CD4-positive, alpha-beta memory T cell (primary cell): ENCODE measurements at regions of chr7 and their contacts with region 1.

Region 1: GRCh38 chr7:92621026-92621540 is 30.9 kb upstream of the FAM133B start:
- DNase-seq: peak; percentile 75 to 86 (median 78)
- H3K4me3 ChIP-seq: no peak overlapping the region
- H3K4me3 Mint-ChIP-seq: peak overlapping the region in 5 of 8 donors; percentile 17 to 71 (median 36)
- H3K27ac ChIP-seq: peak overlapping the region; percentile 39
- H3K27ac Mint-ChIP-seq: peak overlapping the region; percentile 45 to 94 (median 88)
- H3K4me1 ChIP-seq: peaks cover 25% of the 10 kb centered on the region
- H3K4me1 Mint-ChIP-seq: peaks cover 19 to 40% (median 26%) of the 10 kb centered on the region in 4 donors
- H3K27me3 ChIP-seq: no peaks in the 10 kb centered on the region
- H3K27me3 Mint-ChIP-seq: no peaks in the 10 kb centered on the region

Region 2: DNA sequence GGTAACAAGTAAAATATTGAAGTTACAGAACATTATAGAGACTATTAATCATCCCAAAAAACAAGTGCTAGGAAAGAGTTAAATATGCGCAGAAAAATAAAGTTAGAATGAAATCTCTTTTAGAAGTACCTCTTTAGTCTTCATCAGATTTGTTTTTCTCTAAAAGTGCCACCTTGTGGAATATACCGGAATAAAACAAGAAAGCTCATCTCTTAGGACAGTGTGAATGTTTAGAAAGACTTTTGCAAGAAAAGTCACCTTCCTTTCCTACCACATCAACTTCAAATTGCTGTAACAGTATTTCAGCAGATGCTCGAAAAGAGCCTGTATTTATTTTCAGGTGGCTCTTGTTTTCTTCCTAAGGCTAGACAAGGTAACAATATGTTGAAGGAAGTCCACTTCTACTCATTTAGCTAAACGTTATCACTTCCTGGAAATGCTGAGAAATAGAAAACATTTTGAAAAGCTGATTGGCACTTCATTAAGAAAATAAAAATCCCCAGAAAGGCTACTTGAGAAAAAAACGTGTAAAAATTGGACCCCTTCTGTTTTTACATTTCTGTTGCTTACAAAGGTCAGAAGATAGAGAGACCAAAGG is 11.1 kb before region 1 on chr7:
- CTCF ChIA-PET with region 1: interaction called, 29 read pairs
- POLR2A ChIA-PET with region 1: no interaction called
- intact Hi-C with region 1: no loop called
- DNase-seq: peak in 2 of 5 donors; percentile 19 to 27
- H3K4me3 ChIP-seq: no peak overlapping the region
- H3K4me3 Mint-ChIP-seq: no peak overlapping the region
- H3K27ac ChIP-seq: no peak overlapping the region
- H3K27ac Mint-ChIP-seq: peak overlapping the region in 4 of 7 donors; percentile 24 to 62 (median 38)
- H3K4me1 ChIP-seq: peaks cover 9% of the 10 kb centered on the region
- H3K4me1 Mint-ChIP-seq: peaks cover 4 to 9% (median 6%) of the 10 kb centered on the region in 4 donors
- H3K27me3 ChIP-seq: no peaks in the 10 kb centered on the region
- H3K27me3 Mint-ChIP-seq: no peaks in the 10 kb centered on the region

Region 3: GRCh38 chr7:92682903-92683539 is 61.9 kb after region 1 on chr7:
- CTCF ChIA-PET with region 1: interaction called, 4 read pairs
- POLR2A ChIA-PET with region 1: no interaction called
- intact Hi-C with region 1: loop called (anchors 2 kb)
- DNase-seq: peak; percentile 25 to 45 (median 39)
- H3K4me3 ChIP-seq: peak overlapping the region in 1 of 2 donors; percentile 4
- H3K4me3 Mint-ChIP-seq: peak overlapping the region in 7 of 8 donors; percentile 8 to 70 (median 62)
- H3K27ac ChIP-seq: peak overlapping the region; percentile 32
- H3K27ac Mint-ChIP-seq: peak overlapping the region; percentile 38 to 91 (median 81)
- H3K4me1 ChIP-seq: peaks cover 73% of the 10 kb centered on the region
- H3K4me1 Mint-ChIP-seq: peaks cover 65 to 87% (median 76%) of the 10 kb centered on the region in 4 donors
- H3K27me3 ChIP-seq: no peaks in the 10 kb centered on the region
- H3K27me3 Mint-ChIP-seq: no peaks in the 10 kb centered on the region

Region 4: DNA sequence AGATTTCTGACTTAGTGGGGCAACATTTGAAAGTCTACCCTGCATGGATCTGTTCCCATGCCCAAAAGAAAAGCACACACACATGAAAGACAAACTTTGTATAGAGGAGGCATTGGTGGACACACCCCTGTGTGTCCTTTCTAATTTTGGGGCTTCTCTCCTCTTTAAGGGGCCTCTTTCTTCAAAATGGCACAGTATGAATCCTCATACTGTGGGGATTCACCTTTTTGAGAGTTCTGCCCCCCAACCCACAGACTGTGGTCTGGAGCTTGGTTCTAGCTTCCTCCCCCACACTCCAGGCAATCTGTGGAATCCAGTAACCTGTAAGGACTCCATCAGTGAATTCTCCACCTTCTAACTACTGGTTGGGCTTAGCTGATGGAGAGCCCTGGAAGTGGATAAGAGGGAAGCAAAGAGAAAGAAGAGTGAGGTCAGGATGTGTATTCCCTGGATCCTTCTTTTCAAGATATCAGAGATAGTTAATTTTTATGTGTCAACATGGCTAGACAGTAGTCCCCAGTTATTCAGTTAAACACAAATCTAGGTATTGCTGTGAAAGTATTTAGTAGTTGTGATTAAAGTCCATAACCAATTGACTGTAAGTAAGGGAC is 247.7 kb after region 1 on chr7:
- CTCF ChIA-PET with region 1: interaction called, 9 read pairs
- POLR2A ChIA-PET with region 1: no interaction called
- intact Hi-C with region 1: loop called (anchors 1 kb)
- DNase-seq: no peak
- H3K4me3 ChIP-seq: no peak overlapping the region
- H3K4me3 Mint-ChIP-seq: no peak overlapping the region
- H3K27ac ChIP-seq: no peak overlapping the region
- H3K27ac Mint-ChIP-seq: no peak overlapping the region
- H3K4me1 ChIP-seq: no peaks in the 10 kb centered on the region
- H3K4me1 Mint-ChIP-seq: peaks cover 0 to 3% (median under 1%) of the 10 kb centered on the region in 4 donors
- H3K27me3 ChIP-seq: no peaks in the 10 kb centered on the region
- H3K27me3 Mint-ChIP-seq: peaks cover 2 to 6% of the 10 kb centered on the region in 2 donors

Region 5: DNA sequence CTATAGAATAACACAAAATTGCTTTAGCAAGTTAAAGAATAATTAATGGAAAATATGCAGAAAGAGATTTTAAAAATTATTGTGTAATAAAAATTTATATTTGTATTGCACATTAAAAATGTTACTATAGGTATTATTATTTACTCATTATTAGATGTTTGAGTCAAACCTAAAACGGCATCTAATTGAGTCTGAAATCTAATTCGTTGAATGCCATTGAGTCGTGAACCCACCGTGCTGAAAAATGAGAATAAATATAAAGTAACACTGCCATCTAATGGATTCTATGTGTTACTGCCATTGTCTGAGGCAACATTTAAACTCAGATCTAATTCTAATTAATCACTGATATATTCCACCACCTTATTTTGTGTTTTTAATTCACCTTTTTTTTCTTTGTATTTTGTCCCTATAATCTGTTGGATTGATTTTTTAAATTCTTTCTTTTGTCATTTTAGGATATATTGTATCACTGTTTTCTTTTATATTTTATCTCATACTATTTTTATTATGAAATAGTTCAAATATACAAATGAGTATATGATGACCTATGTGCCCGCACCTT is 434.5 kb after region 1 on chr7:
- CTCF ChIA-PET with region 1: interaction called, 12 read pairs
- POLR2A ChIA-PET with region 1: interaction called, 3 read pairs
- intact Hi-C with region 1: loop called (anchors 1 kb)
- DNase-seq: peak in 4 of 5 donors; percentile 37 to 48 (median 46)
- H3K4me3 ChIP-seq: no peak overlapping the region
- H3K4me3 Mint-ChIP-seq: no peak overlapping the region
- H3K27ac ChIP-seq: no peak overlapping the region
- H3K27ac Mint-ChIP-seq: no peak overlapping the region
- H3K4me1 ChIP-seq: no peaks in the 10 kb centered on the region
- H3K4me1 Mint-ChIP-seq: peaks cover 0 to 2% (median 0%) of the 10 kb centered on the region in 4 donors
- H3K27me3 ChIP-seq: no peaks in the 10 kb centered on the region
- H3K27me3 Mint-ChIP-seq: peaks cover 0 to 4% of the 10 kb centered on the region in 2 donors